Stomach (tissue), 19 donors: ENCODE measurements at regions of chr2 and their contacts with region 1.

Region 1: DNA sequence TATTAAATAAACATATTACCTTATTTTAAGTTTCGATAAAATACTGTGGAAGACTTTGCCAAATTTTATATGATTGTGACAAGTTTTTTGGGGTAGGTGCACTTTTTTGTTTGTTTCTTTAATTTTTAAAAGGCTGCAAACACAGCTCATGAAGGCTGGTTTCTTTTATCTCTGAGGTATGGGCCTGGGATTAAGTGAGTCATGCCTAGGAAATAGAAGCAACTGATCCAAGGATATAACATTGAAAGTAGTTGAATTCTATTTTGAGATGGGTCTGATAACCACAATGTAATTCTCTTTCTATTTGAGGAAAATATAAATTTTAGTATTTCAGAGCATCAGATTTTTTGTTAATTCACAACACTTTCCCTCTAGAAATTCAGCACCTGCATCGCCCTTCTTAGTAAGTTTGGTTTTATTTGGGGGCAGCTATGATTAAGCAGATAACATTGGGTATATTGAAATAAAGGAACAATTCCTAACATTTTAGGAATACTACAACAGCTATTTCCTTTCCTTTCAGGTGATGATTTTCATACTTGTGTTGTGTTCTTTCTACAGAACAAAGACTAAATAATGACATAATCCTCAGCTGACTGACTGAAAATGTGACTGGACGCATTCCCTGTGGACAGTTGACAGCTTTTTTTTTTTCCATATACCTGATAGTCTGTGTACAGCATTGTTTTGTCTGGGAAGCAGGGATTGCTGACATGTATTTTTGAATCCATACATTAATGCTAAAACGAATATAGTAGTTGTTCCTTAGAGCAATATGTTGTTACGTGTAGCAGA is 16.8 kb downstream of the RBM45 start:
- DNase-seq: no peak
- H3K4me3 ChIP-seq: no peak overlapping the region
- H3K27ac ChIP-seq: no peak overlapping the region
- H3K4me1 ChIP-seq: no peaks in the 10 kb centered on the region
- H3K27me3 ChIP-seq: no peaks in the 10 kb centered on the region
- CTCF ChIP-seq: no peak
- EP300 ChIP-seq: no peak
- POLR2A ChIP-seq: no peak

Region 2: GRCh38 chr2:178280244-178280852 is 151.3 kb after region 1 on chr2:
- intact Hi-C with region 1: loop called (anchors 5 kb)
- DNase-seq: peak in 1 of 2 donors; percentile 49
- H3K4me3 ChIP-seq: no peak overlapping the region
- H3K27ac ChIP-seq: no peak overlapping the region
- H3K4me1 ChIP-seq: peaks cover 0 to 14% (median 0%) of the 10 kb centered on the region in 4 donors
- H3K27me3 ChIP-seq: no peaks in the 10 kb centered on the region
- CTCF ChIP-seq: peak in 5 of 7 experiments; percentile 54 to 89 (median 78)
- EP300 ChIP-seq: no peak
- POLR2A ChIP-seq: no peak